HCT116 (cell line): ENCODE measurements at regions of chr7 and their contacts with region 1.

Region 1: DNA sequence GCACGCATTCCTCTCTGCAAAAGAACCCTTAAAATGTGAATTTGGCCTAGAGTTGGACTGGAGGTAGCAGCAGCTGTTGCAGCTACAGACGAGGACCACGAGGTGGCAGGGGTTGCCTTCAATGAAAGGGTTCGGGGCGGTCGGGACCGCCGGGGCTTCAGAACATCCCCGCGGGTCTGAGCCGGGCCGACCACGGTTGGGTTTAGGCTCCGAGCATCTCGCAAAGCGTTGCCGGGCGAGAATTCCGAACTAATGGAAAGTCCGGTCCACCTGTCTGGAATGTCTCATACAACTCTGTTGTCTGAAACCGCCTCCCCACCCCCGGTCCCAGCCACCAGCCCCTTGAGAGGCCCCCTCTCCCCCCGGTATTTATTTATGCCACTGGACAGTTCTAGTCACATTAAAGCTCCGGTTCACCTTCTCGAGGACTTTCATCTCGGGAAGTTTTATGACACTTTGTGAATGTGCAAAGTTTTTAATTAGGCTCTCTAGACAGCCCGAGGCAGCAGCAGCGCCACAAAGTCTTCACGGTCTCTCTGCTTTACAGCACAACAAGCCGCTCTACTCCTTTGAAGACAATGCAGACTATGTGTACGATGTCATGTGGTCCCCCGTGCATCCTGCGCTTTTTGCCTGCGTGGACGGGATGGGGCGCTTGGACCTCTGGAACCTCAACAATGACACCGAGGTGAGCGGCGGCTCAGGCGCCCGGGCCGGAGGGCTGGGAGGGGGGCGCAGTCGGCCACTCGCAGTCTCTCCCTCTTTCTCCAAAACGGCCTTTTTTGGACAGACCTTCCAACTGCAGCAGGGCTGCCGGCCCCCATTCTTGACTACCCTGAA is 246.2 kb downstream of the SLC25A13 start:
- DNase-seq: peak; percentile 8
- ATAC-seq: peak; percentile 97
- H3K4me3 ChIP-seq: no peak overlapping the region
- H3K27ac ChIP-seq: no peak overlapping the region
- H3K4me1 ChIP-seq: 0 out of 4 replicates have a peak, but pooled peaks cover 0 to 4% of the 10 kb centered on the region in 2 experiments
- H3K27me3 ChIP-seq: peaks cover 68% of the 10 kb centered on the region
- CTCF ChIP-seq: peak; percentile 43 to 82 (median 76); a peak in 5 of 6 replicates
- POLR2A ChIP-seq: no peak
- RAD21 ChIP-seq: peak; percentile 80

Region 2: DNA sequence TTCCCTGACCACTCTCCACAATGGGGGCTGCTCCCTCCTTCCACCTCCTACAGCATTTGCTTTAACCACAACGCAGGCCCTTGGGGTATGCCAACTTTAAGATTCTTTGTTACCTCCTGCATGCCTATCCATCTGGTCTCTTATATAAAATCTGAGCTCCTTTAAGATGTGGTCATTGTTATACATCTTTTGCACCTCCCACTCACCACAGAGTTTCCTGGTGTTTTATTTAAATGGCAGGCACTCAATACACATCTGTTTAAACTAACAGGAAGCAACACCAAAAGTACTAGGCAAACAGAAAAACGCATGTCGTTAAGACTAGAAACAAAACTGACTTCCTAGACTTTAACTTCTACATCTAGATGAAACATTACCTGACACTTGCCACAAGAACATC is 209.8 kb after region 1 on chr7:
- CTCF ChIA-PET with region 1: no interaction called
- POLR2A ChIA-PET with region 1: no interaction called
- RAD21 ChIA-PET with region 1: no interaction called
- intact Hi-C with region 1: no loop called
- DNase-seq: no peak
- ATAC-seq: no peak
- H3K4me3 ChIP-seq: no peak overlapping the region
- H3K27ac ChIP-seq: no peak overlapping the region
- H3K4me1 ChIP-seq: no peaks in the 10 kb centered on the region
- H3K27me3 ChIP-seq: no peaks in the 10 kb centered on the region
- CTCF ChIP-seq: no peak
- POLR2A ChIP-seq: no peak
- RAD21 ChIP-seq: no peak

Region 3: GRCh38 chr7:96414931-96415292 is 339.2 kb after region 1 on chr7:
- CTCF ChIA-PET with region 1: no interaction called
- POLR2A ChIA-PET with region 1: no interaction called
- RAD21 ChIA-PET with region 1: no interaction called
- intact Hi-C with region 1: loop called (anchors 2 kb)
- DNase-seq: peak; percentile 13
- ATAC-seq: peak; percentile 83
- H3K4me3 ChIP-seq: no peak overlapping the region
- H3K27ac ChIP-seq: no peak overlapping the region
- H3K4me1 ChIP-seq: no peaks in the 10 kb centered on the region
- H3K27me3 ChIP-seq: peaks cover 19% of the 10 kb centered on the region
- CTCF ChIP-seq: peak; percentile 44 to 87 (median 75); a peak in 5 of 6 replicates
- POLR2A ChIP-seq: no peak
- RAD21 ChIP-seq: peak; percentile 73